AG04449 (cell line): ENCODE measurements at regions of chr2 and their contacts with region 1.

Region 1: DNA sequence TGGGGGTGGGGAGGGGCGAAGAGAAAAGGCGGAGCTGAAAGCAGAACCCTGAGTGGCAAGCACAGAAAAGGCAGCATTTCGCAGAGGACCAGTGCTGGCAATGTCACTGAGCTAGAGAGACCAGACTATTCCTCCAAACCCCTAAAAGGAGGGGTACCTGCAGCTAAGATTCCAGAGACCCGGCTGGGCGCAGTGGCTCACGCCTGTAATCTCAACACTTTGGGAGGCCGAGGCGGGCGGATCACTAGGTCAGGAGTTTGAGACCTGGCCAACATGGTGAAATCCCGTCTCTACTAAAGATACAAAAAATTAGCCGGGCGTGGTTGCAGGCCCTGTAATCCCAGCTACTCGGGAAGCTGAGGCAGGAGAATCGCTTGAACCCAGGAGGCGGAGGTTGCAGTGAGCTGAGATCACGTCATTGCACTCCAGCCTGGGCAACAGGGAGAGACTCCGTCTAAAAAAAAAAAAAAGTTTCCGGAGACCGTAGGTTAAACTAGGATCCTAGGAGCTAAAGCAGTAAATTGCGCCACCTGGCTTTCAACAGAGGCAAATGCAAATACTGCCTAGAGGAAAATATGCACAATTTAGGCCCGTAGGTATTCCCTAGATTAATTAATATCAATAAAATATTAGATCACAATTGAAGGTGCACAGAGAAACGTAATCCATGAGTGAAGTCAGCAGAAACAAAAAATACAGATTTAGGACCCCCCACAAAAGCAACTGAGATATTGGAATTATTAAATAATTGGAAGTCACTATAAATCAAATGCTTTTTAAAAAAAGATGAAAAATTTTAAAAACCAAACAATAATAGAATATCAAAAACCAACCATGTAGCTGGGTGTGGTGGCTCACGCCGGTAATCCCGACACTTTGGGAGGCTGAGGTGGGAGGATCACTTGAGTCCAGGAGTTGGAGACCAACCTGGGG is 4.9 kb downstream of the UCN start:
- DNase-seq: no peak
- H3K4me3 ChIP-seq: no peak overlapping the region
- CTCF ChIP-seq: peak; percentile 65

Region 2: DNA sequence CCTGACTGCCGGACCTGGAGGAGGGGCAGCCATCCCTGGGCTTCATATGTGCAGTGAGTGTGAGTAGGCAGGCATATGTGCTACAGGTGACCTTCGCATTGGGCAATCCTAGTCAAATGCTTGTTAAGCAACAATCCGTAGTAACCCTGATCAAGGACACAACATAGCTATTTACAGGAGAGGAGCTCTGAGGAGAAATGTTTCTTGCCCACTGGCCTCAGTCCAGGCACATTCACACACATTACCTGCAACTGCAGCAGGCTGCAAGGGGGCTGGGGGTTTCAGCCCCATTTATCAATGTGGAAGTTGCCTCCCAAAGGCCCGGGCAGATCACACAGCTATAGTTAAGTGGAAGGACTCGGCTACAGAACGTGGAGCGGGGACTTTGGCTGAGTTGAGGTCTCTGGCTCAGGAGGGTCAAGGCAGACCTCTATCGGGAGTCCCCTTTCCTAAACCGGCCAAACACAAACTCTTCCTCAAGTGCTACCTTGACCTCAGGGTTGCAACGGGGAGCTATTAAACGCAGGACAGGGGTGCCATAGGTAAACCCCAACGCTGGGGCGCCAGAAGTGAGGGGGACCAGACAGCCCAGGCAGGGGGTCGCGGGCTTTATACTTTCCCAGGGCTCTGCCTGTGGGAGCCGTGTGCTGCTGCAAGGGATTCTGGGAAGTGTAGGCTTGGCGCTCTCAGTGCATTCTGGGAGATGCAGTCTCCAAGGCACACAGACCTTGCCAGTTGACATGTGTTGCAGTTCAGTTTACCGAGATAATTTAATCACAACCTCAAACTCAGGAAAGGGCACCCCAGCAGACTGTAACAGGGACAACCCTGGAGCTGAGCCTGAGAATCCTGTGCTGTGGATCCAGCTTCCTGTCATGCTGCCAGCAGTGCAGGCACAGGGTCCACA is 207.4 kb before region 1 on chr2:
- CTCF ChIA-PET with region 1: interaction called, 155 read pairs
- POLR2A ChIA-PET with region 1: no interaction called
- DNase-seq: no peak
- H3K4me3 ChIP-seq: peak overlapping the region; percentile 23
- CTCF ChIP-seq: no peak

Region 3: DNA sequence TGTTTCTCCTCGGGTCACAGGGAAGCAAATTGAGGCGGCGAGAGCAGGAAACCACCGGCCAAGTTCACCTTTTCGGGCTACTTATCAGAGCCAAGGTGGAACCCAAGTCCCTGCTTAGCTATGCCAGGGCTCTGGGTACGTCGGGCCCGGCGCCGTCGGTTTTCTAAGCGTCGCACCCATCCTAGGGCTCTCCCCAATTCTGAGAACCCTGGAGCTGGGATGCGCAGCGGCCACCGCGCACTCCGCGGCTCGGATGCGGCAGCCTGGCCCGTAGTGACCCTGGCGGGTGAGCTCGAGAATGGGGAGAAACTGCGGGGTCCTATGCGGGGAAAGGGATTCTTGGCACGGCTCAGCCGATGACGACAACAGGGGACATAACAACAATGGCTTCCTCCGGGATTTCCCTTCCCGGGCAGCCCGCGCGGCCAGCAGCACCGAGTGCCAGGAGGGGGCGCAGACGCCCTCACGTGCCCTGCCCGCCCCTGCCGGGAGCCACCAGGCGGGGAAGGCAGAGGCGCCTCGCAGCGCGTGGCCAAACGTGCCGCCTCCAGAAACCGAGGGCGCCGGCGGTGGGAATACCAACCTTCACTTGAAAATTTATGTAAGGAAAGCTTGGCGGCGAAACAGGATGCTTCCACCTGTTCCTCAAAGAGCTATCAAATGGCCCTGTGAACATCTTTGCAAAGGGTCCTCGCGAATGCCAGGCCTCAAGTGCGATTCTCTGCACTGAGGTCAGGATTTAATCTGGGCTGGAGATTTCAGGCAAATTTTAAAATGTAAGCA is 38.4 kb before region 1 on chr2:
- CTCF ChIA-PET with region 1: interaction called, 37 read pairs
- POLR2A ChIA-PET with region 1: interaction called, 3 read pairs
- DNase-seq: no peak
- H3K4me3 ChIP-seq: peak overlapping the region; percentile 43
- CTCF ChIP-seq: peak; percentile 80

Region 4: GRCh38 chr2:27291865-27292264 is 11.5 kb before region 1 on chr2:
- CTCF ChIA-PET with region 1: interaction called, 104 read pairs
- POLR2A ChIA-PET with region 1: interaction called, 3 read pairs
- DNase-seq: no peak
- H3K4me3 ChIP-seq: no peak overlapping the region
- CTCF ChIP-seq: no peak

Region 5: GRCh38 chr2:27322766-27323595 is 19.6 kb after region 1 on chr2 and contains the start of gene MPV17:
- CTCF ChIA-PET with region 1: interaction called, 94 read pairs
- POLR2A ChIA-PET with region 1: no interaction called
- DNase-seq: peak; percentile 73
- H3K4me3 ChIP-seq: peak within 1 kb of the TSS; percentile 96
- CTCF ChIP-seq: no peak